Activated naive CD4-positive, alpha-beta T cell treated with anti-CD3 and anti-CD28 coated beads for 36 hours (primary cell): ENCODE measurements at regions of chr18 and their contacts with region 1.

Region 1: DNA sequence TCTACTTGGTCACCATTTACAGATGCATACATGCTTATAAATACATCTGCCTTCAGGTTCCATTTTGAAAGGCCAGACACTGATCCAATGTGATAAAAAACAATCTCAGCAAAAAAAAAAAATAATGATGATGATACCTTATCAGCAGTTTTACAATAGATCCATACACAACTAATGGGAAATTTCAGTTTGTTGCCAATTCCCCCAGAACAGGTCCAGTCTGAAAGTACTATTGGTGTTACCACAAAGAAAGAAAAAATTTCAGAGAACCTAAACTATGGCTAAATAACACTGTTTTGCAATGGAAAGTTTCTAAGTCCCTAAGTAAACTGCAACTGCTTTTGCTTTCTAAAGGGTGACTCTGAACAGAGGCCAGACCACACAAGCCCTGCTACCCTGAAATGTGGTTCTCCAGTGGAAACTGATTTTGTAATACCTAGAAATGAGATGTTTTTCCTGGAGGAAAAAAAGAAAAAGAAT is 54.1 kb downstream of the LPIN2 start:
- DNase-seq: peak; percentile 44
- H3K4me3 Mint-ChIP-seq: peak overlapping the region; percentile 53
- H3K27ac Mint-ChIP-seq: peak overlapping the region; percentile 100
- H3K4me1 Mint-ChIP-seq: peaks cover 88% of the 10 kb centered on the region
- H3K27me3 Mint-ChIP-seq: no peaks in the 10 kb centered on the region

Region 2: GRCh38 chr18:2597639-2598038 is 361.2 kb before region 1 on chr18:
- CTCF ChIA-PET with region 1: no interaction called
- intact Hi-C with region 1: no loop called
- DNase-seq: no peak
- H3K4me3 Mint-ChIP-seq: no peak overlapping the region
- H3K27ac Mint-ChIP-seq: peak overlapping the region; percentile 29
- H3K4me1 Mint-ChIP-seq: peaks cover 46% of the 10 kb centered on the region
- H3K27me3 Mint-ChIP-seq: no peaks in the 10 kb centered on the region

Region 3: GRCh38 chr18:2641638-2642037 is 317.2 kb before region 1 on chr18:
- CTCF ChIA-PET with region 1: no interaction called
- intact Hi-C with region 1: loop called (anchors 1 kb)
- DNase-seq: no peak
- H3K4me3 Mint-ChIP-seq: peak overlapping the region; percentile 23
- H3K27ac Mint-ChIP-seq: peak overlapping the region; percentile 86
- H3K4me1 Mint-ChIP-seq: peaks cover 52% of the 10 kb centered on the region
- H3K27me3 Mint-ChIP-seq: no peaks in the 10 kb centered on the region

Region 4: GRCh38 chr18:2971741-2972552 is 13.1 kb after region 1 on chr18:
- CTCF ChIA-PET with region 1: interaction called, 20 read pairs
- intact Hi-C with region 1: loop called (anchors 1 kb)
- DNase-seq: peak; percentile 83
- H3K4me3 Mint-ChIP-seq: peak overlapping the region; percentile 77
- H3K27ac Mint-ChIP-seq: peak overlapping the region; percentile 100
- H3K4me1 Mint-ChIP-seq: peaks cover 86% of the 10 kb centered on the region
- H3K27me3 Mint-ChIP-seq: no peaks in the 10 kb centered on the region

Region 5: DNA sequence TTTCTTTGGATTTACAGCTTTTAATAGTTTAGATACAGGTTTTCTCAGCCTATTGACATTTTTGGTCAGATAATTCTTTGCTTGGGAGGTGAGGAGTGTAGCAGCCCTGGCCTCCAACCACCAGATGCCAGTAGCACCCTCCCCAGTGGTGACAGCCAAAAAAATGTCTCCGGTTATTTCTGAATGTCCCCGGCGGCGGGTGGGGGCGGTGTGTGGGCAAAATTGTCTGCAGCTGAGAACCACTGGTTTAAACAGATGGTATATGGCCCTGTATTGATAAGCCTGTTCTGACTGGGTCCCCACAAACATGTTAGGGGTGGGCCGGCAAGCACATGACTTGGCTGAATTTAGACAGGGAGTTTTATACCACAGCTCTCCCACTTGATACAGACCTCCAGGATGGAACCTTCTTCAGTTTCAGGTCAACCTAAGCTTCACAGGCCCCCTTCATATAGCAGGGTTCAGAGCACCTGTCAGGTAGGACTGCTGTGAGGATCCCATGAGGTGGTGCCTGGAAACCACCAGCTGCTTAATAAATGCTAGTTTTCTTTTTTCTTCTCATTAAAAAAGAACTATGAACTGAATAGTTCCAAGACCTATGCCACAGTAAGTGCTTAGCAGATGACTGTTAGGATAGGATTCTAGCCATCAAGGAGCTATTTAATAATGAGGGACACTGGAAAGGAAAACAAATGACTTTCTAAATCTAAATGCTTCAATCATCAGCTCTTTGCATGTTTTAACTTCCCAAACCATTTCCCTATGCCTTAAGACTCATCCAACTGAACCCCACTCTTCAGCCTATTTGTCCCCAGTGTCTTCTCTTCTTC is 36.0 kb after region 1 on chr18:
- CTCF ChIA-PET with region 1: interaction called, 7 read pairs
- intact Hi-C with region 1: loop called (anchors 1 kb)
- DNase-seq: peak; percentile 85
- H3K4me3 Mint-ChIP-seq: no peak overlapping the region
- H3K27ac Mint-ChIP-seq: peak overlapping the region; percentile 78
- H3K4me1 Mint-ChIP-seq: peaks cover 91% of the 10 kb centered on the region
- H3K27me3 Mint-ChIP-seq: no peaks in the 10 kb centered on the region

Region 6: GRCh38 chr18:3055196-3055728 is 96.4 kb after region 1 on chr18:
- CTCF ChIA-PET with region 1: no interaction called
- intact Hi-C with region 1: no loop called
- DNase-seq: no peak
- H3K4me3 Mint-ChIP-seq: no peak overlapping the region
- H3K27ac Mint-ChIP-seq: no peak overlapping the region
- H3K4me1 Mint-ChIP-seq: peaks cover 48% of the 10 kb centered on the region
- H3K27me3 Mint-ChIP-seq: no peaks in the 10 kb centered on the region